Activated naive CD4-positive, alpha-beta T cell treated with anti-CD3 and anti-CD28 coated beads for 36 hours (primary cell): ENCODE measurements at regions of chr4 and their contacts with region 1.

Region 1: DNA sequence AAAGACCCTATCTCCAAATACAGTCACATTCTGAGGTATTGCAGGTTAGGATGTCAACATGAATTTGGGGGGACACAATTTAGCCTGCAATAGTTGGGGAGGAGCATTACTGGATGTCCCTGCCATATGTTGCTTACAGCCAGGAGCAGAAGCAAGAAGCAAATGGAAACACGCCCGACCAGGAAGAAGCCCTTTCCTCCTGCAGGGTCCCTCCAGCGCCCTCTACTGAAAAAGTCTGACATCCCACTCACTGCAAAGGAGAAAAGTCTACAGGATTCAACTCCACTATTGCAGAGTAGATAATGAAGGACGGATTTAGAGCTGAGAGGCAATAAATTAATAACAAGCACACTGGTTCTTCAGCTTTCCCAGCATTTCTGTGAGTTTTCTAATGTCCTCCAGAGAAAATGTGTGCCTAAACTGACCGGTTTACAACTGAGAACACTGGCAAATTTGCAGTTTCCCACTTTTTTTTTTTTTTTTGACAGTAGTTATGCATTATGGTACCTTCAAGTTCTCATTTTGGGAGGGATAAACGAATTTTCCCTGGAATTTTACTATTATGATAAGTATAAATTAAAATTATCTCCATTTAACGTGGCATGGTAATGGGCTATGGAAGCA is 31.7 kb downstream of the COQ2 start:
- DNase-seq: peak; percentile 90
- H3K4me3 Mint-ChIP-seq: no peak overlapping the region
- H3K27ac Mint-ChIP-seq: no peak overlapping the region
- H3K4me1 Mint-ChIP-seq: peaks cover 6% of the 10 kb centered on the region
- H3K27me3 Mint-ChIP-seq: no peaks in the 10 kb centered on the region

Region 2: DNA sequence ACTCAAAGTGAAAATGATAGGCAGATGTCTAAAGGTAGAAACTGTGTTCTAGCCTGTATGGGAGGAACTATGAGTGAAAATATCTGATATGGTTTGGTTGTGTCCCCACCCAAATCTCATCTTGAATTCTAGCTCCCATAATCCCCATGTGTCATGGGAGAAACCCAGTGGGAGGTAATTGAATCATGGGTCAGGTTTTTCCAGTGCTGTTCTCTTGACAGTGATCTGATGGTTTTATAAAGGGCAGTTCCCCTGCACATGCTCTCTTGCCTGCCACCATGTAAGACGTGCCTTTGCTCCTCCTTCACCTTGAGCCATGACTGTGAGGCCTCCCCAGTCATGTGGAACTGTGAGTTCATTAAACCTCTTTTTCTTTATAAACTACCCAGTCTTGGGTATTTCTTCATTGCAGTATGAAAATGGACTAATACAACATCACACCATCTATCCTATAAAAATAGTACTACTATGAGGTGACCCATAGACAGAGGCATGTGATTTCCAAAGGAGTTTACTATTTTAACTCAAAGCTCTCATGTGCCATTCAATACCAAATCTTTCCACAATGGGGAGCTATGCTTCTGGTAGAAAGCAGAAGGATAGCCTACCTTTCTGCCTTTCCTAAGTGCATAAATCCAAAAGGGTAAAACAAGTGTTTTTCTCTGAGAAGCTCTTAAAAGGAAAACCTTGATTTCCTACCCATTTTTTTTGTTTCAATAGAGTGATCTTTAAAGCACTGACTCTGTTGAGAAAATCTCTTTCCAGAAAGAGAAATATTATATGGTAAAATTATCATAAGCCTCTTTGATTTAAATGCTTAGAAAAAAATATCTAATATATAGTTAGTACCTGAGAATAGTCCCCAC is 400.8 kb before region 1 on chr4:
- CTCF ChIA-PET with region 1: interaction called, 3 read pairs
- intact Hi-C with region 1: loop called (anchors 2 kb)
- DNase-seq: no peak
- H3K4me3 Mint-ChIP-seq: no peak overlapping the region
- H3K27ac Mint-ChIP-seq: no peak overlapping the region
- H3K4me1 Mint-ChIP-seq: peaks cover 6% of the 10 kb centered on the region
- H3K27me3 Mint-ChIP-seq: no peaks in the 10 kb centered on the region

Region 3: DNA sequence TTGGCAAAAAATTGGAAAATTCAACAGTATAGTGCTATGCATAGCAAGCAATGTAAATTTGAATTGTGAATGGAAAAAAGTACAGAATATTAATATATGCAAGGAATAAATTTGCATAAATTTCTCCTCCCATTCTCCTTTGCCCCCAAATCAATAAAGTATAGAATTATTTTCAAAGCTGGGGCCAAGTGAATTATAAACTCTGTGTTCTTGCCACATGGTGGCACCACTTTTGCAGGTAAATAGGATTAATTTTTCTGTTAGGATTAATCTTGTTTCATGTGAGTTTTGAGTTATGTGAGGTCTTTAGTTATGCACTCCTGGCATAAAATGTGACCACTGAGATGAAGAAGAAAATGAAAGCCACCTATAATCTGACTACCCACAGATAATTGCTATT is 198.0 kb before region 1 on chr4:
- CTCF ChIA-PET with region 1: interaction called, 9 read pairs
- intact Hi-C with region 1: loop called (anchors 2 kb)
- DNase-seq: peak; percentile 34
- H3K4me3 Mint-ChIP-seq: no peak overlapping the region
- H3K27ac Mint-ChIP-seq: no peak overlapping the region
- H3K4me1 Mint-ChIP-seq: no peaks in the 10 kb centered on the region
- H3K27me3 Mint-ChIP-seq: no peaks in the 10 kb centered on the region

Region 4: GRCh38 chr4:83150653-83151330 is 102.1 kb before region 1 on chr4:
- CTCF ChIA-PET with region 1: interaction called, 3 read pairs
- intact Hi-C with region 1: loop called (anchors 1 kb)
- DNase-seq: no peak
- H3K4me3 Mint-ChIP-seq: no peak overlapping the region
- H3K27ac Mint-ChIP-seq: no peak overlapping the region
- H3K4me1 Mint-ChIP-seq: peaks cover 28% of the 10 kb centered on the region
- H3K27me3 Mint-ChIP-seq: no peaks in the 10 kb centered on the region

Region 5: GRCh38 chr4:83212041-83212851 is 40.6 kb before region 1 on chr4:
- CTCF ChIA-PET with region 1: interaction called, 24 read pairs
- intact Hi-C with region 1: loop called (anchors 1 kb)
- DNase-seq: peak; percentile 72
- H3K4me3 Mint-ChIP-seq: no peak overlapping the region
- H3K27ac Mint-ChIP-seq: peak overlapping the region; percentile 65
- H3K4me1 Mint-ChIP-seq: peaks cover 54% of the 10 kb centered on the region
- H3K27me3 Mint-ChIP-seq: no peaks in the 10 kb centered on the region

Region 6: GRCh38 chr4:83231620-83232076 is 21.2 kb before region 1 on chr4:
- CTCF ChIA-PET with region 1: interaction called, 4 read pairs
- intact Hi-C with region 1: loop called (anchors 1 kb)
- DNase-seq: peak; percentile 68
- H3K4me3 Mint-ChIP-seq: no peak overlapping the region
- H3K27ac Mint-ChIP-seq: peak overlapping the region; percentile 16
- H3K4me1 Mint-ChIP-seq: peaks cover 46% of the 10 kb centered on the region
- H3K27me3 Mint-ChIP-seq: peaks cover 3% of the 10 kb centered on the region

Region 7: DNA sequence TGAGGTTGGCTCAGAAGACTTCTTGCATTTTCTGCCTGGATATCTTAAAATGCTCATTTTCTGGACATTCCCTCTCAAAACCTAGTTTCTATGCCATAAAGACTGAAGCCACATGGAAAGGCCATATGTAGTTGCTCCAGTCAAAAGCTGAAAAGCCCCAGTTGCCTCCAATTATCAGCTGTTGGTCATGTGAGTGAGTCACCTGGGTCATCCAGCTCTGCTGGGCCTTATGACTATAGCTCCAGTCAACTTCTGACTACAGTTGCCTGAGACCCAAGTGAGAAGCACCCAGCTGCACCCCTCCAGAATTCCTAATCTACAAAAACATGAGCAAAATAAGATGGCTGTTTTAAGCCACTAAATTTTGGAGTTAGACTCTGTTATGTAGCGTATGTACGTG is 160.8 kb after region 1 on chr4:
- CTCF ChIA-PET with region 1: no interaction called
- intact Hi-C with region 1: no loop called
- DNase-seq: no peak
- H3K4me3 Mint-ChIP-seq: no peak overlapping the region
- H3K27ac Mint-ChIP-seq: no peak overlapping the region
- H3K4me1 Mint-ChIP-seq: no peaks in the 10 kb centered on the region
- H3K27me3 Mint-ChIP-seq: no peaks in the 10 kb centered on the region

Region 8: DNA sequence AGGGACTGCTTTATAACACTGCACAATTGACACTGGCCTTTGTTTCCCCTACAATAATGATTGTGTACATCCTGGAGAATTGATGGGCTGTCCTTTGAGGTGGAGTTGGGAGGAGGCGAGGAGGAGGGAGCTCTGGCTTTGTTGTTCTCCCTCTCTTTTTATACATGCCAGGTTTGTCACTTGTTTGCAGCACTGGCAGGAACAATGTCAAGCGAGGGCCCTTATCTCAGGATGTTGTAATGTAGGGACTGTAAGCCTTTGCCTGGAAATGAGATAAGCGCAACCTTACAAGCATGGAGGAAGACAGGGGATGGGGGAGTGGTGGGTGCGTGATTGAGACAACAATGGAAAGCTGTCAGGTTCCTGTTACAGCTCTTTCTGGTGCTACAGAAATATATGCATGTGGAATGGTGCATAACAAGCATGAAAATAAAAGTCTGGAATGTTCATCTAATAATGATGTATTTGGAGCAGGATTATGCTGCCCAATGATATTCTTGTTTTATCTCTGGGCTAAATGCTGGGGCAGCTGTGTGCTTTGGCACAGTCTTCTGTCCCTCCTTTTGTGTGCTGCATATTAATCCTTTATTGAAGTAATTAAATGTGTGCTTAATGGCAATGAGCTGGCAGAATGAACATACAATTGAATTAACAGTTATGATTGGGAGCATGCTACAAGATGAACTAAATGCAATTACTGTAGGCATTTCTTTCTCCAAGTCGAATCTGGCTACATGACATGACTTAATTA is 577.4 kb after region 1 on chr4:
- CTCF ChIA-PET with region 1: no interaction called
- intact Hi-C with region 1: no loop called
- DNase-seq: no peak
- H3K4me3 Mint-ChIP-seq: no peak overlapping the region
- H3K27ac Mint-ChIP-seq: no peak overlapping the region
- H3K4me1 Mint-ChIP-seq: no peaks in the 10 kb centered on the region
- H3K27me3 Mint-ChIP-seq: no peaks in the 10 kb centered on the region

Region 9: GRCh38 chr4:83917572-83917971 is 664.7 kb after region 1 on chr4:
- CTCF ChIA-PET with region 1: no interaction called
- intact Hi-C with region 1: no loop called
- DNase-seq: no peak
- H3K4me3 Mint-ChIP-seq: no peak overlapping the region
- H3K27ac Mint-ChIP-seq: no peak overlapping the region
- H3K4me1 Mint-ChIP-seq: no peaks in the 10 kb centered on the region
- H3K27me3 Mint-ChIP-seq: no peaks in the 10 kb centered on the region